ENCODE measurements at regions of chr6 and their contacts with region 1.

Region 1: GRCh38 chr6:87589693-87590549 is at the starts of genes ORC3 and RARS2:
- DNase-seq: peak; percentile 94
- ATAC-seq: peak; percentile 99
- H3K4me3 ChIP-seq: peak within 1 kb of the TSS; percentile 74 to 100 (median 96)
- H3K4me3 Mint-ChIP-seq: peak within 1 kb of the TSS; percentile 96
- H3K27ac ChIP-seq: peak within 1 kb of the TSS; percentile 78 to 91
- H3K27ac Mint-ChIP-seq: peak within 1 kb of the TSS; percentile 88
- H3K4me1 ChIP-seq: peaks cover 27 to 28% of the 10 kb centered on the region in 2 donors
- H3K4me1 Mint-ChIP-seq: peaks cover 56% of the 10 kb centered on the region
- H3K27me3 ChIP-seq: no peaks in the 10 kb centered on the region
- H3K27me3 Mint-ChIP-seq: no peaks in the 10 kb centered on the region
- CTCF ChIP-seq: no peak
- total RNA-seq, gene ORC3: 27.8 and 31.2 TPM in 2 replicates
- total RNA-seq, gene RARS2: 37.9 and 38.7 TPM in 2 replicates

Region 2: DNA sequence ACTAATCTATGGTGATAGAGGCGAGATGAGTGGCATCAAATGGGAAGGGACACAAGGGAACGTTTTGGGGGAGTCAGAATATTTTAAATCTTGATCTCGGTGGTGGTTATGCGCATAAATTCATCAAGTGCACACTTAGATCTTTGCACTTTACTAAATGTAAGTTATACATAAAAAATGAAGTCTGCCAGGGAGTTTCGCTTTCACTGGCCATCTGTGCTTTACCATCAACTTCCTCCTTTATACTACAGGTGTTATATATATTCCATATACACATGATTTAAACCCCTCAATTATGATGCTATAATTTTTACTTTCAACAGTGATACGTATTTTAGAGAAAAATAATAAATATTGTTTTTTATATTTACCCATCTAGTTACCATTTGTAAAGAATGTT is 209.7 kb after region 1 on chr6:
- CTCF ChIA-PET with region 1: no interaction called
- POLR2A ChIA-PET with region 1: no interaction called
- intact Hi-C with region 1: loop called (anchors 5 kb)
- DNase-seq: peak; percentile 63
- ATAC-seq: peak; percentile 69
- H3K4me3 ChIP-seq: peak overlapping the region in 2 of 5 experiments; percentile 13 to 20
- H3K4me3 Mint-ChIP-seq: peak overlapping the region; percentile 42
- H3K27ac ChIP-seq: peak overlapping the region in 1 of 2 donors; percentile 50
- H3K27ac Mint-ChIP-seq: peak overlapping the region; percentile 28
- H3K4me1 ChIP-seq: peaks cover 38 to 54% of the 10 kb centered on the region in 2 donors
- H3K4me1 Mint-ChIP-seq: peaks cover 46% of the 10 kb centered on the region
- H3K27me3 ChIP-seq: no peaks in the 10 kb centered on the region
- H3K27me3 Mint-ChIP-seq: no peaks in the 10 kb centered on the region
- CTCF ChIP-seq: no peak

Measured in B cell (primary cell).